ENCODE measurements at regions of chr10 and their contacts with region 1.

Region 1: DNA sequence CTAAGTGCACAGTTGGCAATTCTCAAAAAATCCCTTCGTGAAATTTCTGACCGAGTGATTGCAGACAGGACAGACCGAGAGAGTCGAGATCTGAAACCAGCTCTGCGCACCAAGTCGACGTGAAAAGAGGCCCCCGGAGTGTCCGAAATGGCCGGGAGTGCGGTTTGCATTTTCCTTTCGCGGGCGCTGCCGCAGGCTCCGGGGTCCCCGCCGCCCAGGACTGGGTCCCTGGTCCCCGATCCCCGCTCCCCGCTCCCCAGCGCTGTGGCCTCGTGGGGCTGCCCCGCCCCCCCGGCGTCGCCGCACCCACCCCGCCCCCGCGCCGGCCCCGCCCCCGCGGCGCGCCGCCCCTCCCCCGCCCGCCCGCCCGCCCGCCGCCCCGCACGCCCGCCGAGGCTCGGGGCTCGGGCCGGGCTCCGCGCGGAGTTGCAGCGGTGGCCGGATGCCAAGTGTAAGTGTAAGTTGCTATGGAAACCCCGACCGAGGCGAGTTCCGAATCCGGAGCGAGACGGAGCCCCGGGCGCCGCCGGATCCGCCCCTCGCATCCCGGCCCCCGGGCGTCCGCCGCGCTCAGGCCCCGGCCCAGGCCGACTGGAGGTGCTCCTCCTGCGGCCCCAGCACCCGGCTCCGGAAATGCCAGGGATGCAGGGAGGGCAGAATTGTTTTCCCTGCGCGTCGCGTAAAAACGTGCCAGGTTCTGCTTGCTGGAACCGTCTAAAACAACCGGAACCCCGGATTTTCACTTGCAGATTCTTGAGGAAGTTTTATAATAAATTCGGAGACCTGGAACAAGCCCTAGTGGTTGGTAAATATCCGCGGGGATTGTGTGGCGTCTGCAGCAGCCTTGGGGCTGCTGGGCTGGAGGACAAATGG is 4.6 kb downstream of the BMI1 start:
- DNase-seq: peak; percentile 87
- ATAC-seq: peak; percentile 47

Region 2: GRCh38 chr10:21525367-21526183 is 799.9 kb before region 1 on chr10 and contains the start of gene SKIDA1:
- intact Hi-C with region 1: loop called (anchors 10 kb)
- DNase-seq: peak; percentile 94
- ATAC-seq: peak; percentile 87
- total RNA-seq, gene SKIDA1: 2.6 TPM

Region 3: GRCh38 chr10:22414146-22414545 is 88.6 kb after region 1 on chr10:
- intact Hi-C with region 1: no loop called
- DNase-seq: no peak
- ATAC-seq: no peak

Region 4: DNA sequence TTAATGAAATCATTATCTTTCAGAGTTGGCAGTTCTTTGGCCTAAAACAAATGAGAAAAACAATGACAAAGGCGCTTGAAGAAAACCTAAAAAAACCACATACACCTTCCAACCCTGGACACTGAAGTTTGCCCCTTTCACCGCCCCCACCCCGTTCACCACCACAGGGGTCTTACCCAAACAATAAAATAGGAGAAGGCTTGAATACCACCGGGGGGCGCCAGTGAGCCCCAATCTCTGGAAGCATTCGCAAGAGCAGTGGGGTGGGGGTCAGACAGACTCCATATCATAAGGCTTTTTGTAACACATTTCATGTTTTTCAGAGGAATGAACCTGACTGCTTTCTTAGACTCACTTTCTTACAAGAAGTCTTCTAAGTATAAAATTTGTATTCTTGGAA is 225.2 kb after region 1 on chr10:
- intact Hi-C with region 1: loop called (anchors 10 kb)
- DNase-seq: no peak
- ATAC-seq: no peak

Region 5: GRCh38 chr10:22606164-22606614 is 280.7 kb after region 1 on chr10:
- intact Hi-C with region 1: no loop called
- DNase-seq: no peak
- ATAC-seq: peak; percentile 67

Region 6: DNA sequence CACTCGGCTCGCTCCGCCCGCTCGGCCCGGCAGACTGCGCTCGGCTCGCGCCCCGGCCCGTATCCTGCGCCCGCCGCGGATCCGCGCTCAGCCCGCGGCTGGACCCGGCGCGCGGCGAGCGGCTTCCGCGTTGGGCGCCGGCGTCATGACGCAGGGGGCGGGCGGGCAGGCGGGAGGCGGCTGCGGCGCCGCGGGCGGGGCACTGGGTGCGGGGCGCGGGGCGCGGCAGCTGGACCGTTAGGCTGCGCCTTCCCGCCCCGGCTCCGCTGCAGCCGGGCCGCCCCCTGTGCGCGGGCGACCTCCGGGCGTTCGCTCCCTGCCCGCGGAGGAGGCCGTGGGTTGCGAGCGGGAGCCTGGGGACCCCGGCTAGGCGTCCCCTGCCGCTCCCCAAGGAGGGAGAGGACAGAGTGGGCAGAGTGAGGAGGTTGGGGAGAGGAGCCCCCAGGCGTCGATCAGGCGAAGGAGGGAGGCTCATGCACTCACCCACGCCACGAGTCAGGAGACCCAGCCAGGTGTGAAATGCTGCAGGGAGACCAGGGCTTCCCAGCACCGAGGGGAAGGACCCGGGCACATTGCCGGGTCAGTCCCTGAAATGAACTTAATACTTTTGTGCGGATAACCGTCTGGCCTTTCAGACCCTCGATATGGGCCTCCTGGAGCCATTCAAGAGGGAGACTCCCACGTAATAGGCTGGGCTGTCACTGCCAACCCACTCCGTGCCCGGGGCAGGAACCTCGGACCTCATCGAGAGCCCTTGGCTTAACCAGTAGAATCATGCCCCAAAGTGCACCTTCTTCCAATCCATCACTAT is 389.2 kb after region 1 on chr10 and contains the start of gene PIP4K2A:
- intact Hi-C with region 1: loop called (anchors 10 kb)
- DNase-seq: peak; percentile 93
- ATAC-seq: peak; percentile 91
- total RNA-seq, gene PIP4K2A: 14.0 TPM

Region 7: DNA sequence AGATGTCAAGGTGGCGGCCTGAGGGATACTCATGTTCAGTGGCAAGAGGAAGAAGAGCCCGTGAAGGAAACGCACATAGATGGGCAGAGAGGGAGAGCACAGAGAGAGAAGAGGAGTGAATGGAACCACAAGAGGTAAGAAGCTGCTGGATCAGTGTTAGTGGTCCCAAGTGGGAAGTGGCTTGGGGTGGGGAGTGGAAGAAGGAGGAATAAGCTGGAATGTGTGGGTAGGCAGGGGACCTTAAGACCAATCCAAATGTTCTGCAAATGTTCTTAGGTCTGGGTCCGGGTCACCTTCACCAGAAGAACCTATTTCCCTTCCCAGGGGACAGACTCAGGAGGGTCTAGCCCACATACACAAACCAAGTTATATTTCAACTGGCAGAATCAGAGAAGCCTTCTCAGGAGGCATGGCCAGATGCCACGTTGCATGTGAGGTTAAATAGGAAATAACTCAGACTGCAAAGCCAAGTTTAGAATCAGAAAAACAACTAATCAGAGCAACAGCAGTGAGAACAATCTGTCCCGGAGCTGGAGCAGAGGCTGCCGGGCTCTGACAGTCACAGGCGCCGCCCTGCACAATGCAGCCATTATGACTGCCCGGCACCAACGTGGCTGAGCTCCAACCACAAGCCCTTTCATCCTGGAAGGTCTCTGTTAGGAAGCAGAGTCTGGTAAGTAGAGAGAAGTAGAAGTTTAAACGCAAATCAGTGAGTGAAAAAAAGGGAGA is 523.7 kb after region 1 on chr10:
- intact Hi-C with region 1: loop called (anchors 10 kb)
- DNase-seq: peak; percentile 91
- ATAC-seq: peak; percentile 98